HepG2 (cell line): ENCODE measurements at regions of chr3 and their contacts with region 1.

Region 1: GRCh38 chr3:14863333-14864100 is 44.8 kb downstream of the FGD5 start:
- DNase-seq: no peak
- ATAC-seq: peak; percentile 74
- H3K4me3 ChIP-seq: no peak overlapping the region
- H3K27ac ChIP-seq: no peak overlapping the region
- H3K4me1 ChIP-seq: no peaks in the 10 kb centered on the region
- H3K27me3 ChIP-seq: peaks cover 0 to 4% of the 10 kb centered on the region in 2 experiments; a peak in 1 of 5 replicates
- CTCF ChIP-seq: peak; percentile 56
- EP300 ChIP-seq: no peak
- POLR2A ChIP-seq: no peak
- RAD21 ChIP-seq: no peak

Region 2: DNA sequence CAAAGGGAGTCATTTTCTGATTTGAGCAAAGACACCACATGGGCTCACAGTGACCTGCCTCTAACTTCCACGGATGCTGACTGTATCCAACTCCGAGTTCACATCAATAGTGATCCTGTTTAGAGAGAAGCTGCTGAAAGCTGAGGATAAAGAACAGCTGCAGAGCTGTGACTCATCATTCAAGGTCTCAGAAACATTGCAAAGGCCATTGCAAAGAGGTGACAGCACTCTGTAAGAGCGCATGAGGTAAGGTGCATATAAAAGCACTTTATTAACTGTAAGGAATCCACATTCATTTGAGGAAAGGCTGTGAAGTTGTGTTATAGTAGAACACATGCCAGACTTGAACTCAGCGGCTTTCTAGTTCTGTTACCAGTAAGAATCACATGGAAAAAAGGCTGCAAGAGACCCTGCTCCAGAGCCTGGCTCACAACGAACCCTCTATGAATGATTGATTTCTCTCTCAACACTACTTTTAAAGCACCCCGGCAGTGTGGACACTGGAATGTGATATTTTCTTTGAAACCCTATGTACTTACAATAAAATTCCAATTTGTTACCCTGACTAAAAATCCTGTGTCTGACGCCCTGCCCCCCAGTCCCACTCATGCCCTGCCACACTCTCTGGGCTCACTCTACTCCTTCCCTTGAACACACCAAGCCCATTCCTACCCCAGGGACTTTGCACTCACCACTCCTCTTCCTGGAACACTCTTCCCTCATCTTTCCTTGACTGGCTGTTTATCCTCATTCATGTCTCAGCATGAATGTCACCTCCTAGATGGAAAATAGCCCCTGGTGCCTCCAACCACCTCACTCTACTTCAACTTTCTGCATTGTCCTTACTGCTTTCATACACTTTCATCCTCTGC is 573.7 kb before region 1 on chr3:
- CTCF ChIA-PET with region 1: no interaction called
- POLR2A ChIA-PET with region 1: no interaction called
- in situ Hi-C with region 1: no loop called
- intact Hi-C with region 1: no loop called
- DNase-seq: peak; percentile 59
- ATAC-seq: peak; percentile 92
- H3K4me3 ChIP-seq: no peak overlapping the region
- H3K27ac ChIP-seq: no peak overlapping the region
- H3K4me1 ChIP-seq: peaks cover 19% of the 10 kb centered on the region
- H3K27me3 ChIP-seq: peaks cover 3 to 24% of the 10 kb centered on the region in 2 experiments; a peak in 4 of 5 replicates
- CTCF ChIP-seq: no peak
- EP300 ChIP-seq: no peak
- POLR2A ChIP-seq: no peak
- RAD21 ChIP-seq: no peak

Region 3: DNA sequence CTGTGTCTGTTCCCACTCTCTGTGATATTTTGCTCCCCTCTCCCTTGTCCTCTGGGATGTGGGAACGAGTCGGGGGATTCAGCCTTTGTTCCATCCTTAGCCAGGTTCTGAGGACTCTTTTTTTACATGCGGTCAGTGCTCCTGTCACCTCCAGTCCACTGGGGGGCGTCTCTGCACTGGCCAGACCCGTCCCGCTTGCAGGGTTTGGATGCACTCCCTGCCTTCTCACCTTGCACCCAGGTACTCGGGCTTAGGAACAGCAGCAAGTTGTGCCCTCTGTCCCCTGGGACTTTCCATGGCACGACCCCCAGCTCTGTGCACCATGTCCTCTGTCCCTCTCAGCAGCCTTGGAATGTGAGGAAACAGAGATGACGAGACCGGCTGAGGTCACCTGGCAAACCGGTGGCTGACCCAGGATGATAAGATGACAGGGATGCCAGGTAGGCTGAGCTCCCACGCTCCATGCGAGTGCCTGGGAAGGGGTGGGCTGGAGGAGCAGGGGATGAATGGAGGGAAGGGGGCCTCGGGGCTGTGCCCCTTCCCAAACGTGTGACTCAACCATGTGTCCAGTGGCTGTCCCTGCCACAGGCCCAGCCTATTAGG is 72.1 kb before region 1 on chr3:
- CTCF ChIA-PET with region 1: no interaction called
- POLR2A ChIA-PET with region 1: no interaction called
- in situ Hi-C with region 1: no loop called
- intact Hi-C with region 1: loop called (anchors 1 kb)
- DNase-seq: peak; percentile 46
- ATAC-seq: peak; percentile 88
- H3K4me3 ChIP-seq: no peak overlapping the region
- H3K27ac ChIP-seq: no peak overlapping the region
- H3K4me1 ChIP-seq: peaks cover 14% of the 10 kb centered on the region
- H3K27me3 ChIP-seq: peaks cover 0 to 6% of the 10 kb centered on the region in 2 experiments; a peak in 2 of 5 replicates
- CTCF ChIP-seq: peak; percentile 96
- EP300 ChIP-seq: no peak
- POLR2A ChIP-seq: no peak
- RAD21 ChIP-seq: peak; percentile 85

Region 4: DNA sequence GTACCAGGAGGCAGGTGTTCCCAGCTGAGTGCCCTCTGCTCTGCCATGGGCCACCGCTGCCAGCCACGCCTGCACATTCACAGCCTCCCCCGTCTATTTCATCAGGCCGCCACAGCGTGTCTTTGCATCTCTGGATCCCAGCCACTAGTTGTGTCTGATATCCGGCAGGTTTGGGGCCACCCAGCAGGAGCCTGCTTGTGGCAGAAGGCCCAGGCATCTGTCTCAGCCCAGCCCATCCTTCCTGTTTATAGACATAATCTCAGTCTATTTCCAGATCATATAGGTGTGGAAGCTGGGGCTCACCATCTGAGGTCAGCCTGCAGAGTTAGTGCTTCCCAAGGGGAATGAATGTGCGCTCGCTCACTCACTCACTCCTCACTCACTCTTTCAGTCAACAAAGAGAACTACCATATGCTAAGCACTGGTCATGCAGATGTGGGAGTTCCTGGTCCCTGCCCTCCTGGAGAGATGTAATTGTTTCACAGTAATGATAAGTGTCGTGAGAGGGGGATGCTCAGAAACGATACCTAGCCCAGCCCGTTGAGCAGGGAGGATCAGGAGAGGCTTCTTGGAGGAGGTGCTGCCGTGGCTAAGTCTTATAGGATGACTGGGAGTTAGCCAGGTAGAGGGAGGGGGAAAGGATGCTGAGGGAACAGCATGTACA is 15.8 kb after region 1 on chr3:
- CTCF ChIA-PET with region 1: no interaction called
- POLR2A ChIA-PET with region 1: no interaction called
- in situ Hi-C with region 1: no loop called
- intact Hi-C with region 1: no loop called
- DNase-seq: no peak
- ATAC-seq: no peak
- H3K4me3 ChIP-seq: no peak overlapping the region
- H3K27ac ChIP-seq: no peak overlapping the region
- H3K4me1 ChIP-seq: peaks cover 9% of the 10 kb centered on the region
- H3K27me3 ChIP-seq: peaks cover 0 to 1% of the 10 kb centered on the region in 2 experiments; a peak in 2 of 5 replicates
- CTCF ChIP-seq: no peak
- EP300 ChIP-seq: no peak
- POLR2A ChIP-seq: no peak
- RAD21 ChIP-seq: no peak